Right ventricle myocardium inferior (tissue), 1 donor: ENCODE measurements at regions of chr19 and their contacts with region 1.

Region 1: GRCh38 chr19:16778796-16779411 is 50.3 kb upstream of the SIN3B start:
- DNase-seq: no peak
- ATAC-seq: peak; percentile 69

Region 2: DNA sequence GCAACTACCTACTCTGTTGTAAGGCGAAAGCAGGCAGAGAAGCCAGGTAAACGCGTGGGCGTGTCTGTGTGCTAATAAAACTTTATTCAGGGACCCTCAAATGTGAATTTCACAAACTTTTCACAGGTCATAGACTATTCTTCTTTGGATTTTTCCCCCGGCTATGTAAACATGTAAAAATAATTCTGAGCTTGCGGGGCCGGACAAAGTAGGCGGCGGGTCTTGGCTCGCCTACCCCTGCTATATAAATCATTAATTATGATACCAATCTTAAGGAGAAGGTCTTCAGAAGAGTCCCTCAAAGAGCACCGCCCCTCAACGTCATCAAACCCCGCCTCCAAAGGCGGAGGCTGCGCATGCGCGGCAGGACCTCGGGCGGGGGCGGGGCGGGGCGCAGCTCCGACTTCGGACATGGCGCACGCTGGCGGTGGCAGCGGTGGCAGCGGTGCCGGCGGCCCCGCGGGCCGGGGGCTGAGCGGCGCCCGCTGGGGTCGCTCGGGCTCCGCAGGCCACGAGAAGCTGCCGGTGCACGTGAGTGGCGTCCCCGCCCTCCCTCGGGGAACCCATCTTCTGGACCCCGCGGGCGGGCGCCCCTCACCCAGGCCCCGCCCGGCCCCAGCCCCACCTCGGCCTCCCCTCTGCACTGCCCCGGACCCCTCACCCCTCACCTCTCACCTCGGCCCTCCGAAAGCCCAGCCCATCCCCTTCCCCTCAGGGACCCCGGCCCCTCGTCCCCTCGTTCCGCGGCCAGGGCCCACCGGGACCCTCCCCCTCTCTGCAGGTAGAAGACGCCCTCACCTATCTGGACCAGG is 50.3 kb after region 1 on chr19 and contains the start of gene SIN3B:
- intact Hi-C with region 1: loop called (anchors 5 kb)
- DNase-seq: peak; percentile 89
- ATAC-seq: peak; percentile 80
- total RNA-seq, gene SIN3B: 27.8 TPM

Region 3: DNA sequence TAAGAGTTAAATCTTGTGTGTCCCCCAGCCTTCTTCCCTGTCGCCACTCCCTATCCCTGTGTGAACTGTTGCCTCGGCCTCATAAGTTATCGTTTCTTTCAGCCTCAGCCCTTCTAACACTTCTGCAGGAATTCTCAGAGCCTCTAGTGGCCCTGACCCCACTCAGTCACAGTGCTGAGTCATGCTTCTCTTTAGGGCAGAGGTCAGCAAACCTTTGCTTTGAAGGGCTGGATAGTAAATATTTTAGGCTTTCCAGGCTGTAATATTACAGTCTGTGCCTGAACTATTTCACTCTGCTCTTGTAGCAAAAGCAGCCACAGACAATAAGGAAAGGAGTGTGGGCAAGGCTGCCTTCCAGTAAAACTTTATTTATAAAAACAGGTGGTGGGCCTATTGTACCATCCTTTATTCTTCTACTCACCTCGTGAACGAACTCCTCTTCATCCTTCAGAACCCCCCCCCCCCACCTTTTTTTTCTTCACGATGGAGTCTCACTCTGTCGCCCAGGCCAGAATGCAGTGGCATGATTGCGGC is 318.8 kb after region 1 on chr19:
- intact Hi-C with region 1: no loop called
- DNase-seq: no peak
- ATAC-seq: peak; percentile 58